A673 (cell line): ENCODE measurements at regions of chr4 and their contacts with region 1.

Region 1: GRCh38 chr4:168923526-168924194 is 86.4 kb downstream of the CBR4 start:
- DNase-seq: peak; percentile 83
- H3K4me3 ChIP-seq: no peak overlapping the region
- H3K27ac ChIP-seq: no peak overlapping the region
- H3K4me1 ChIP-seq: no peaks in the 10 kb centered on the region
- H3K27me3 ChIP-seq: no peaks in the 10 kb centered on the region
- CTCF ChIP-seq: peak; percentile 80

Region 2: GRCh38 chr4:169210504-169211118 is 287.0 kb after region 1 on chr4:
- CTCF ChIA-PET with region 1: no interaction called
- POLR2A ChIA-PET with region 1: no interaction called
- intact Hi-C with region 1: no loop called
- DNase-seq: no peak
- H3K4me3 ChIP-seq: no peak overlapping the region
- H3K27ac ChIP-seq: no peak overlapping the region
- H3K4me1 ChIP-seq: no peaks in the 10 kb centered on the region
- H3K27me3 ChIP-seq: no peaks in the 10 kb centered on the region
- CTCF ChIP-seq: no peak

Region 3: DNA sequence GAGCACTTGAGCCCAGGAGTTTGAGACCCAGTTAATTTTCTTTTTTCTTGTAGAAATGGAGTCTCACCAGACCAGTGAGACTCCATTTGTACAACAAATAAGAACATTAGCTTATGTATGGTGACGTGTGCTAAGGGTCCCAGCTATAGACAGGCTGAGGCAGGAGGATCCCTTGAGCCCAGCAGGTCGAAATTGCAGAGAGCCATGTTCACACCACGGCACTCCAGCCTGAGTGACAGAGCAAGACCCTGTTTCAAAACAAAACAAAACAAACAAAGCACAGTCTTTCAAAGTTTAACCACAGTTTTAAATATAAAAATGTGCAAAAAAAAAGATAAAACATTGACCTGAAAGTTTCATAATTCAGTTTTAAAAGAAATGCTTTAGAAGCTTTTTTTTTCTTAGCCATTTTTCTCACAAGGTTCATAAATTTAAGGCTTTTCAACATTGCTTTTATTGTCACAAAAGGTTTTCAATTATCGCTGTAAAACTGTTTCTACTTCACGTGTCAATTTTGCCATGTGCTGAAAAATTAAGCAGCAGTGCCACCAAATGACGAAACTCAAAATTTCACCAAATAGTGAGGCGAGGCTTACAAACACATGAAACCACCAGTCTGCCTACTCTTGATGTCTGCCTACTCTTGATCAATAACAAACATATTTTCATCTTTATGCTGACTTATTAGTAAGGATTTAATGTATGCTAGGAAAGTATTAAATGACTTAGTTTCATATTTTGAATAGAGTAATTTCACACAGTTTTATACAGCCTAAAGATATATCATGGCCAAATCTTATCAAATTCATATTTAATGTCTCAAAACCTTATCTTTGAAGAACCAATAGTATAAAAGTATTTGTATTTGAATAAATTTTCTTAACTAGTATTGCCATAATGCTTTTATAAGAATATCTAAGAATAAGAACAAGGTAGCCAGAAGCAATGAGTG is 562.4 kb after region 1 on chr4:
- CTCF ChIA-PET with region 1: interaction called, 3 read pairs
- POLR2A ChIA-PET with region 1: no interaction called
- intact Hi-C with region 1: loop called (anchors 1 kb)
- DNase-seq: peak; percentile 76
- H3K4me3 ChIP-seq: no peak overlapping the region
- H3K27ac ChIP-seq: no peak overlapping the region
- H3K4me1 ChIP-seq: no peaks in the 10 kb centered on the region
- H3K27me3 ChIP-seq: no peaks in the 10 kb centered on the region
- CTCF ChIP-seq: peak; percentile 73

Region 4: DNA sequence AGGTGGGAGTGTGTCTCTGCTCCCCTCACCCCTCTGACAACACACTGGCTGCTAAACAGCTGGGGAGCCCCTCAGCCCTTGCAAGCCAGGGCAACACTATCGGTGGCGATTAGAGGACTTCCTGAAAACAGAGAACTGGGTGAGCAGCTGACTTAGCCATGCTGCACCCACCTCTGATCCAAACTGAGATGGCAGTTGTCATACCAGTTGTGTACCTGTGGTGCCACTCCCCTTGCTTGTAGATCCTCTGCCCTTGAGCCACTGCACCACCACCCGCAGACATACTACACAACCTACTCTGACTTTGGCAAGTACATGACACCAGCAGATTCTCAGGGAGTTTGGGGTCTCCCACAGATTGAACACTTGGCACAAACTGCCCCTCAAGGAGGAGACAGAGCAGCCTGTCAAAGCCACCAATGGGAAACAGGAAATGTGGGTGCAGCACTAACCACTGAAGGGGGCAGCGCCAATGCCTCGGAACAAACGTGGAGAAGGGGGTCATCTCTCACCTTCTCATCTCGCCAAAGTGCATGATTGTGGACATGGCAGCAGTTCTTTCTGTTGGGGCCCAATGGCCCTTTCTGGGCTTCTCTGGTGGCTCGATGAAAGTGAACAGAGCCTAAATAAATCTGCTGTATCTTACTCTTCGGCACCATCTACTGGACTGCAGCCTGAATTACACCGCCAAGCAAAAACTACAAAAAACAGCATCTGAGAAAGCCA is 568.9 kb after region 1 on chr4:
- CTCF ChIA-PET with region 1: no interaction called
- POLR2A ChIA-PET with region 1: no interaction called
- intact Hi-C with region 1: loop called (anchors 2 kb)
- DNase-seq: peak; percentile 62
- H3K4me3 ChIP-seq: no peak overlapping the region
- H3K27ac ChIP-seq: no peak overlapping the region
- H3K4me1 ChIP-seq: no peaks in the 10 kb centered on the region
- H3K27me3 ChIP-seq: no peaks in the 10 kb centered on the region
- CTCF ChIP-seq: peak; percentile 82